Breast epithelium (tissue), 4 donors: ENCODE measurements at regions of chr5 and their contacts with region 1.

Region 1: GRCh38 chr5:74428876-74429275 is 211.7 kb downstream of the ENC1 start:
- DNase-seq: no peak
- H3K4me3 ChIP-seq: no peak overlapping the region
- H3K27ac ChIP-seq: no peak overlapping the region
- H3K4me1 ChIP-seq: no peaks in the 10 kb centered on the region
- H3K27me3 ChIP-seq: no peaks in the 10 kb centered on the region
- CTCF ChIP-seq: no peak
- POLR2A ChIP-seq: no peak

Region 2: DNA sequence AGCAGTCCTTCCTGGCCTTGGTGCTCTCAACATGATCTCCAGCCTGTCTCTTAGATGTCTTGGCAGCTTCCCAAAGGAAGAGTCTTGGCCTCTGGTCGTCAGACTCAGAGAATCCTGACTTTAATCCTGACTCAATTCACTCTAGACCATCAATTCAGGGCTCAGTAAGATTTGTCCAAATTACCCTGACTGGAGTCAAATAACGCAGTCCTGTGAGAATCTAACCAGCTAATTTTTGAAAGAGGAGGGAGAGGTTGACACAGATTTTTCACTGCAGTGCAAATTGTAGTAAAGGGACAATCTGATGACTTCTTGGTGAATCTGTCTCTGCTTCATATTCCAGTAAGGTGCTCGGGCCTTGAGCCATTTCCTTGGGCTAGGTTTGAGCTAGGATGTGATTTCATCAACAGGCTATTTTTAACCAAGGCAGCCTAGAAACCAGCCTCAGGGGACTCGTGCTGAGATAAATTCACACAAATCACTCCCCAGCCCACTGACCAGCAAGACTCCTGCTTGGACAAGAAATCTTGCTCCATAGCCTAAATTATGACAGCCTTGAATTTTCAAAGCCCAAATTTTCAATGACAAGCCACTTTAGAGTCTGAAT is 45.8 kb before region 1 on chr5:
- intact Hi-C with region 1: loop called (anchors 2 kb)
- DNase-seq: no peak
- H3K4me3 ChIP-seq: no peak overlapping the region
- H3K27ac ChIP-seq: peak overlapping the region; percentile 61 to 86
- H3K4me1 ChIP-seq: peaks cover 4 to 13% of the 10 kb centered on the region in 2 donors
- H3K27me3 ChIP-seq: no peaks in the 10 kb centered on the region
- CTCF ChIP-seq: no peak
- POLR2A ChIP-seq: no peak